Tibial artery (tissue), 4 donors: ENCODE measurements at regions of chr2 and their contacts with region 1.

Region 1: GRCh38 chr2:103605071-103605780 is 843.4 kb downstream of the TMEM182 start:
- DNase-seq: no peak
- H3K4me3 ChIP-seq: no peak overlapping the region
- H3K27ac ChIP-seq: no peak overlapping the region
- H3K4me1 ChIP-seq: no peaks in the 10 kb centered on the region
- H3K27me3 ChIP-seq: no peaks in the 10 kb centered on the region
- CTCF ChIP-seq: no peak

Region 2: GRCh38 chr2:103667335-103667884 is 62.2 kb after region 1 on chr2:
- intact Hi-C with region 1: no loop called
- DNase-seq: no peak
- H3K4me3 ChIP-seq: no peak overlapping the region
- H3K27ac ChIP-seq: no peak overlapping the region
- H3K4me1 ChIP-seq: no peaks in the 10 kb centered on the region
- H3K27me3 ChIP-seq: no peaks in the 10 kb centered on the region
- CTCF ChIP-seq: no peak

Region 3: GRCh38 chr2:103840276-103840675 is 235.1 kb after region 1 on chr2:
- intact Hi-C with region 1: no loop called
- DNase-seq: no peak
- H3K4me3 ChIP-seq: no peak overlapping the region
- H3K27ac ChIP-seq: no peak overlapping the region
- H3K4me1 ChIP-seq: no peaks in the 10 kb centered on the region
- H3K27me3 ChIP-seq: no peaks in the 10 kb centered on the region
- CTCF ChIP-seq: no peak

Region 4: GRCh38 chr2:103880081-103880834 is 275.0 kb after region 1 on chr2:
- intact Hi-C with region 1: loop called (anchors 5 kb)
- DNase-seq: no peak
- H3K4me3 ChIP-seq: no peak overlapping the region
- H3K27ac ChIP-seq: no peak overlapping the region
- H3K4me1 ChIP-seq: no peaks in the 10 kb centered on the region
- H3K27me3 ChIP-seq: no peaks in the 10 kb centered on the region
- CTCF ChIP-seq: no peak